Common myeloid progenitor, CD34-positive (primary cell): ENCODE measurements at regions of chr1 and their contacts with region 1.

Region 1: DNA sequence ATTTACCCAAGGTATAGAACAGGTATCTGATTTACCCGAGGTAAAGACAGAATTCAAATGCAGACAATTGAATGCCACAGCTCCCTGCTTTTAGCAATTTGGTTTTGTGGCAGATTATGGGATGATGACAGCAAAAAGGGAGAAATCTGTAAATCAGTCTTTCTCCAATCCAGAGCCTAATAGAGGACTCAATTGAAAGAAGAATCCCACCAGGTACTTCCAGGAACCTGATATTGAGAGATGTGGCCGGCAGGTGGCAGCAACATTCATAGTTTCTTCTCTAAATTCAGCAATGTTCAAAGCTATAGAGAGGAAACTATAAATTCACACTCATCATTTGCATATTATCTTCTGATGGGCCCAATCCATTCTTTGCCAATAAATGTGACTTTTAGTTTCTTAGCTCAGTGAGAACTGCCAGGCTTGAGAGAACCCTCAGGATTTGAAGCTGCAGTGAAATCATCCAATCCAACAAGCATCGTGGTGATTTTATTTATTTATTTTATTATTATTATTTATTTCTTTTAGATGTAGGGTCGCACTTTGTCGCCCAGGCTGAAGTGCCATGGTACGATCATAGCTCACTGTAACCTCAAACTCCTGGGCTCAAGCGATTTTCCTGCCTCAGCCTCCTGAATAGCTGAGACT is 9.8 kb upstream of the PHACTR4 start:
- DNase-seq: peak; percentile 71 to 86 (median 80)
- H3K4me3 ChIP-seq: no peak overlapping the region
- H3K27ac ChIP-seq: no peak overlapping the region
- H3K4me1 ChIP-seq: peaks cover 0 to 2% (median 0%) of the 10 kb centered on the region in 4 experiments
- H3K27me3 ChIP-seq: no peaks in the 10 kb centered on the region

Region 2: DNA sequence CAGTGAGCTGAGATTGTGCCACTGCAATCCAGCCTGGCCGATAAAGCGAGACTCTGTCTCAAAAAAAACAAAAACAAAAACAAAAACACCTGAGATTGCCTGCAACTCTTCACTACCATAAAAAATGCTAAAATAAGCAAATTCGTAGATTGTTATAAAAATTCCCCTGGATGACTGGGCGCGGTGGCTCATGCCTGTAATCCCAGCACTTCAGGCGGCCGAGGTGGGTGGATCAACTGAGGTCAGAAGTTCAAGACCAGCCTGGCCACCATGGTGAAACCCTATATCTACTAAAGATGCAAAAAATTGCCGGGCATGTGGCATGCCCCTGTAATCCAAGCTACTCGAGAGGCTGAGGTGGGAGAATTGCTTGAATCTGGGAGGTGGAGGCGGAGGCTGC is 20.2 kb before region 1 on chr1:
- CTCF ChIA-PET with region 1: interaction called, 12 read pairs
- POLR2A ChIA-PET with region 1: no interaction called
- DNase-seq: no peak
- H3K4me3 ChIP-seq: no peak overlapping the region
- H3K27ac ChIP-seq: no peak overlapping the region
- H3K4me1 ChIP-seq: no peaks in the 10 kb centered on the region
- H3K27me3 ChIP-seq: no peaks in the 10 kb centered on the region

Region 3: GRCh38 chr1:28378906-28379305 is 19.2 kb after region 1 on chr1:
- CTCF ChIA-PET with region 1: interaction called, 10 read pairs
- POLR2A ChIA-PET with region 1: no interaction called
- DNase-seq: no peak
- H3K4me3 ChIP-seq: no peak overlapping the region
- H3K27ac ChIP-seq: no peak overlapping the region
- H3K4me1 ChIP-seq: peaks cover 0 to 3% (median 1%) of the 10 kb centered on the region in 4 experiments
- H3K27me3 ChIP-seq: no peaks in the 10 kb centered on the region